CD4-positive, alpha-beta memory T cell (primary cell): ENCODE measurements at regions of chr5 and their contacts with region 1.

Region 1: DNA sequence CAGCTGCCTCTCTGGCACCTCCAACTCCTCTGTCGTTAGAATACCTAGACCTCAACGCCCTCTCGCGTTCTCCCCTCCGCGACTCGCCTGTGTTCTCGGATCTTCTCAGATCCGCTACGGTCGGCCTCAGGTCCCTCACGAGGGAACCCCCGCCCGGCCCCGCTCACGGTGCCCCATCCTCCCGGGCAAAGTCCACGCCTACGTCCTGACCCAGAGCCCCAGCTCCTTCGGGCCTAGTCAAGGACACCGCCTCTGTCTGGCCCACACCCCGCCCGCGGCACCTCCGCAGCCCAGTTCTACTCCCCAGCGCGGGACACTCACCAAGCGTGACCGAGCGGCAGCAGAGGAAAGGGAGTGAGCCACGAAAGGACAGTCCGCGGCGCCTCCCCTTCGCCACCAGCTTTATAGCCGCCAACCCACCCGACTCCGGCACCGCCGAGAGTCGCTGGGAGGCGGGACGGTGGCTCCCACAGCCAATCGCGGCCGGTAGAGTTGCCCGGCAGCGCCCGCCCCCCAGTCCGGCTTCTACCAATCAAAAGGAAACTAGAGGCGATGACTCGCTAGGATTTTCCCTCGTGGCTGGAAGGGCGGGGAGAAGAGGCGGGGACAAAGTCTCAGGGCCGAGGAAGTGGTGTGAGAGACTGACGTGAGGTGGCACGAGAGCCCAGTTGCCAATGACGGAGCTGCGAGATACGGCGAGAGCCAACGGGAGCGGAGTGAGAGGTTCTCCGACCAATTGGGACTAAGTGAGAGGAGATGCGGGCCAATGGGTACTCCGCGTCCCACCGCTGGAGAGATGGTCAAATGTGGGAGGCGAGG is at the start of gene HMGCS1:
- DNase-seq: peak; percentile 99 to 100 (median 99)
- H3K4me3 ChIP-seq: peak within 1 kb of the TSS; percentile 59 to 96
- H3K4me3 Mint-ChIP-seq: peak within 1 kb of the TSS; percentile 95 to 99 (median 98)
- H3K27ac ChIP-seq: peak within 1 kb of the TSS; percentile 95
- H3K27ac Mint-ChIP-seq: peak within 1 kb of the TSS; percentile 78 to 99 (median 98)
- H3K4me1 ChIP-seq: peaks cover 21% of the 10 kb centered on the region
- H3K4me1 Mint-ChIP-seq: peaks cover 19 to 39% (median 25%) of the 10 kb centered on the region in 4 donors
- H3K27me3 ChIP-seq: no peaks in the 10 kb centered on the region
- H3K27me3 Mint-ChIP-seq: no peaks in the 10 kb centered on the region
- total RNA-seq, gene HMGCS1: 27.7 to 35.7 TPM

Region 2: DNA sequence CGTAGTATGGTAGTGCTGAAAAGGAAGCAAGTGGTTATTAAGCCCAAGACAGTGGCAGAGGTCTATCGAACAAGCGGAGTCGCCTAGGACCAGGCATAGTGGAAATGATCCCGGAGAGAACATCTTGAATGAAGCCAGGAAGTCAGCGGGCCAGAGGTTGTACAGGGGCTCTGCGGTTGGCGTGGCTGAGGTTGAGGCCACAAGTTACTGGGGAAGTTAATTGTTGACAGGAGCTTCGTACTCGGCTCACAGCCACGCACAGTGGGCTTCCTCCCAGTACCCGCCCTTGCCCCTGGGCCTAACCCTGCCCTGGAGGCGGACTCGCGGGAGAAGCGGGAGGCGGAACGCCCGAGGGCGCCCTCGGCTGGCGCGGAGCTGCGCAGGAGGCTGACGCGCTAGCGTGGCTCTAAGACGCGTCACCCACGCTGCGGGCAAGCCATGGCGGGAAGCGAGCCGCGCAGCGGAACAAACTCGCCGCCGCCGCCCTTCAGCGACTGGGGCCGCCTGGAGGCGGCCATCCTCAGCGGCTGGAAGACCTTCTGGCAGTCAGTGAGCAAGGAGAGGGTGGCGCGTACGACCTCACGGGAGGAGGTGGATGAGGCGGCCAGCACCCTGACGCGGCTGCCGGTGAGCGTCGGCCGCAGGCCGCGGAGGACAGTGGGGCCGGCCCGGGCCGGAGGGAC is 1388.2 kb before region 1 on chr5 and contains the start of gene FBXO4:
- CTCF ChIA-PET with region 1: interaction called, 3 read pairs
- POLR2A ChIA-PET with region 1: interaction called, 3 read pairs
- intact Hi-C with region 1: loop called (anchors 2 kb)
- DNase-seq: peak; percentile 89 to 93 (median 91)
- H3K4me3 ChIP-seq: peak within 1 kb of the TSS; percentile 83 to 95
- H3K4me3 Mint-ChIP-seq: peak within 1 kb of the TSS; percentile 81 to 91 (median 89)
- H3K27ac ChIP-seq: peak within 1 kb of the TSS; percentile 93
- H3K27ac Mint-ChIP-seq: peak within 1 kb of the TSS; percentile 81 to 100 (median 98)
- H3K4me1 ChIP-seq: peaks cover 25% of the 10 kb centered on the region
- H3K4me1 Mint-ChIP-seq: peaks cover 10 to 33% (median 22%) of the 10 kb centered on the region in 4 donors
- H3K27me3 ChIP-seq: no peaks in the 10 kb centered on the region
- H3K27me3 Mint-ChIP-seq: no peaks in the 10 kb centered on the region
- total RNA-seq, gene FBXO4: 15.1 to 18.2 TPM

Region 3: GRCh38 chr5:42756606-42757601 is 556.3 kb before region 1 on chr5 and contains the start of gene CCDC152:
- CTCF ChIA-PET with region 1: no interaction called
- POLR2A ChIA-PET with region 1: no interaction called
- intact Hi-C with region 1: no loop called
- DNase-seq: peak; percentile 30 to 49 (median 35)
- H3K4me3 ChIP-seq: peak within 1 kb of the TSS in 1 of 2 donors; percentile 43
- H3K4me3 Mint-ChIP-seq: peak within 1 kb of the TSS; percentile 74 to 92 (median 87)
- H3K27ac ChIP-seq: no peak within 1 kb of the TSS
- H3K27ac Mint-ChIP-seq: peak within 1 kb of the TSS; percentile 19 to 67 (median 39)
- H3K4me1 ChIP-seq: no peaks in the 10 kb centered on the region
- H3K4me1 Mint-ChIP-seq: peaks cover 5 to 14% (median 8%) of the 10 kb centered on the region in 4 donors
- H3K27me3 ChIP-seq: no peaks in the 10 kb centered on the region
- H3K27me3 Mint-ChIP-seq: peaks cover 4 to 10% of the 10 kb centered on the region in 2 donors
- total RNA-seq, gene CCDC152: 5.9 to 6.9 TPM

Region 4: GRCh38 chr5:42985129-42986037 is 327.9 kb before region 1 on chr5:
- CTCF ChIA-PET with region 1: no interaction called
- POLR2A ChIA-PET with region 1: no interaction called
- intact Hi-C with region 1: no loop called
- DNase-seq: no peak
- H3K4me3 ChIP-seq: no peak overlapping the region
- H3K4me3 Mint-ChIP-seq: peak overlapping the region in 4 of 8 donors; percentile 20 to 61 (median 45)
- H3K27ac ChIP-seq: no peak overlapping the region
- H3K27ac Mint-ChIP-seq: peak overlapping the region in 5 of 7 donors; percentile 64 to 88 (median 77)
- H3K4me1 ChIP-seq: peaks cover 60% of the 10 kb centered on the region
- H3K4me1 Mint-ChIP-seq: peaks cover 40 to 61% (median 50%) of the 10 kb centered on the region in 4 donors
- H3K27me3 ChIP-seq: no peaks in the 10 kb centered on the region
- H3K27me3 Mint-ChIP-seq: no peaks in the 10 kb centered on the region

Region 5: GRCh38 chr5:43008369-43009153 is 304.7 kb before region 1 on chr5:
- CTCF ChIA-PET with region 1: no interaction called
- POLR2A ChIA-PET with region 1: interaction called, 25 read pairs
- intact Hi-C with region 1: no loop called
- DNase-seq: peak; percentile 89 to 92 (median 90)
- H3K4me3 ChIP-seq: peak overlapping the region; percentile 66 to 84
- H3K4me3 Mint-ChIP-seq: peak overlapping the region; percentile 84 to 94 (median 91)
- H3K27ac ChIP-seq: peak overlapping the region; percentile 85
- H3K27ac Mint-ChIP-seq: peak overlapping the region; percentile 90 to 99 (median 97)
- H3K4me1 ChIP-seq: peaks cover 38% of the 10 kb centered on the region
- H3K4me1 Mint-ChIP-seq: peaks cover 19 to 48% (median 33%) of the 10 kb centered on the region in 4 donors
- H3K27me3 ChIP-seq: no peaks in the 10 kb centered on the region
- H3K27me3 Mint-ChIP-seq: no peaks in the 10 kb centered on the region

Region 6: DNA sequence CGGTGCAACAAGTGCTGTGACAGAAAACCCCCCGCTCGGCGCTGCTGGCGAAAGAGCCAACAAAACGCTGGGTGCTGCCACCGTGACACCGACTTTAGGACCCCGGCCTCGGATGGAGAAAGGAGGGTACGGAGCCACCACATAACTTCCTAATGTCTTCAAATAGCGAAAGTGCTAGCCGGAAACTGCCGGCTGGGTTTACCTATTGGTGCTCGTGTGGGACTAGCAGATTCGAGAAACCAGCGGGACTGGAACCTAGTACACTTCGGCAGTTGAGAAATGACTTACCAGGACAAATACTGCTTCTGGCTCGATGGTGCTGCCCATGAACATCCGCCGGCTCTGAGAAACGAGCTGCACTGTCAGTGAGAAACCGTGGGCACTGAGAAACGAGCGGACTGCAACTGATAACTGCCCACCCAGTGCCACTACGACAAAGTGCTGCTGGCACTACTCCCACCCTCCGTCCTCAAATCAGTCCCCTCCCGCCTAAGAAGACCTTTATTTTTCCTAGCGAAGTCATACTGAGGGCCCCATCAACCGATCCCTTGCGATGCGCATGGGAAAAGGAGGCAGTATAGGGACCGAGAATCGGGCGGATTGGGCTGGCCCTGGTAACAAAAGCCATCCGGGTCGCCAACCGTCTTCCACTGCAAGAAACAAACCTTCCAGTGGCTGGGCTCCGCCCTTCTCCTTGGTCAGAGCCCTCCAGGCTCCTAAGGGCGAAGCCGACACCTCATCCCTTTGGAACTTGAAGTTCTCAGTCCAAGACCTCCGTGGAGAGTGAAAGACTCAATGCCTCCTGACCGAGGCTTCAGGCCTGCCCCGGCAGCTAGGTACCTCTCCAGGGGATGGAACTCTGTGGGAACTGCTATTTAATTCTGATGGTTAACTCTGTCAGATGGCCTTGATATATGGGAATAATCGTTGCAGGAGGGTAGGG is 246.2 kb before region 1 on chr5:
- CTCF ChIA-PET with region 1: no interaction called
- POLR2A ChIA-PET with region 1: interaction called, 36 read pairs
- intact Hi-C with region 1: loop called (anchors 1 kb)
- DNase-seq: peak; percentile 88 to 92 (median 90)
- H3K4me3 ChIP-seq: peak overlapping the region; percentile 97 to 99
- H3K4me3 Mint-ChIP-seq: peak overlapping the region; percentile 97 to 100 (median 98)
- H3K27ac ChIP-seq: peak overlapping the region; percentile 94
- H3K27ac Mint-ChIP-seq: peak overlapping the region; percentile 98 to 100 (median 99)
- H3K4me1 ChIP-seq: peaks cover 46% of the 10 kb centered on the region
- H3K4me1 Mint-ChIP-seq: peaks cover 31 to 59% (median 43%) of the 10 kb centered on the region in 4 donors
- H3K27me3 ChIP-seq: no peaks in the 10 kb centered on the region
- H3K27me3 Mint-ChIP-seq: no peaks in the 10 kb centered on the region

Region 7: DNA sequence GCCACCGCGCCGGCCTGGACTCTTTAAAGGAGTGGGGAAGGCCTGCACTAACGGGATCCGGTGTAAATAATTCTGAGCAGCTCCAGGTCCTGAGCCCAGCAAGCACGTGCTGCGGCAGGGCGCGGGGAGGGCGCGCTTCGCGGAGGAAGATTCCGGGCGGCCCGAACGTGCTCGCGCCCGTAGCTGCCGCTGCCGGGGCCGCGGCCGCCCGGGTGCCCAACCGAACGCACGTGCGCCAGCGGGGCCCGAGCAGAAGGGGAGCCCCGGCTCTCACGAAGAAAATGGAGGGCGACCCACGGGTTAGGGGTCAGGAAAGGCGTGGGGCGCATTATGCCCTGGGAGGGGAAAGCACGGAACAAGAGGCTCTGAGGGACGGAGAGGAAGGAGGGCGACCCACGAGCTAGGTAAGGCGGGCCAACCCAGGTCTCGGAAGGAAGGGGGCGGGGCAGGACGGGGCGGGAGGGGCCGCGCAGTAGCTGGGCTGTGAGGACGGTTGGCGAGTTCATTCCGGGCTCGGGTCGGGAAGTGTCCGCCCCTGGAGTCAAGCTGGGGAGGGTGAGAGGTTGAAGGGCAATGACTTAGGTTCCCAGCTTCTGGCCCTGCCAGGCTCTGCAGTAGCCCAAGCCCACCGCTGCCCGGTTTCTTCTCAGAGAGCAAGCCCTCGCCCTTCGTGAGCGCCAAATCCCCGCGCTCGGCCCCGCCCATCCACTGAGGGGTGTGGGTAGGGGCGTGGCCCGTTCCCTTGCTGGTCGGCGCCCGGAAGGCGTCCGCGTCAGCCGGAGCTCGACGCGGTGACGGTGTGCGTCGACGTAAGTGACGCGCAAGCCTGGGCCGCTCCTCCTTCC is 192.3 kb before region 1 on chr5 and contains the start of gene ZNF131:
- CTCF ChIA-PET with region 1: interaction called, 14 read pairs
- POLR2A ChIA-PET with region 1: interaction called, 50 read pairs
- intact Hi-C with region 1: loop called (anchors 1 kb)
- DNase-seq: peak; percentile 95 to 100 (median 98)
- H3K4me3 ChIP-seq: peak within 1 kb of the TSS; percentile 85 to 87
- H3K4me3 Mint-ChIP-seq: peak within 1 kb of the TSS; percentile 91 to 96 (median 94)
- H3K27ac ChIP-seq: peak within 1 kb of the TSS; percentile 97
- H3K27ac Mint-ChIP-seq: peak within 1 kb of the TSS; percentile 87 to 99 (median 98)
- H3K4me1 ChIP-seq: peaks cover 45% of the 10 kb centered on the region
- H3K4me1 Mint-ChIP-seq: peaks cover 21 to 46% (median 37%) of the 10 kb centered on the region in 4 donors
- H3K27me3 ChIP-seq: no peaks in the 10 kb centered on the region
- H3K27me3 Mint-ChIP-seq: no peaks in the 10 kb centered on the region
- total RNA-seq, gene ZNF131: 76.5 to 86.9 TPM

Region 8: GRCh38 chr5:43227655-43228054 is 85.6 kb before region 1 on chr5:
- CTCF ChIA-PET with region 1: no interaction called
- POLR2A ChIA-PET with region 1: no interaction called
- intact Hi-C with region 1: no loop called
- DNase-seq: no peak
- H3K4me3 ChIP-seq: no peak overlapping the region
- H3K4me3 Mint-ChIP-seq: no peak overlapping the region
- H3K27ac ChIP-seq: no peak overlapping the region
- H3K27ac Mint-ChIP-seq: no peak overlapping the region
- H3K4me1 ChIP-seq: no peaks in the 10 kb centered on the region
- H3K4me1 Mint-ChIP-seq: no peaks in the 10 kb centered on the region
- H3K27me3 ChIP-seq: no peaks in the 10 kb centered on the region
- H3K27me3 Mint-ChIP-seq: peaks cover 0 to 2% of the 10 kb centered on the region in 2 donors

Region 9: DNA sequence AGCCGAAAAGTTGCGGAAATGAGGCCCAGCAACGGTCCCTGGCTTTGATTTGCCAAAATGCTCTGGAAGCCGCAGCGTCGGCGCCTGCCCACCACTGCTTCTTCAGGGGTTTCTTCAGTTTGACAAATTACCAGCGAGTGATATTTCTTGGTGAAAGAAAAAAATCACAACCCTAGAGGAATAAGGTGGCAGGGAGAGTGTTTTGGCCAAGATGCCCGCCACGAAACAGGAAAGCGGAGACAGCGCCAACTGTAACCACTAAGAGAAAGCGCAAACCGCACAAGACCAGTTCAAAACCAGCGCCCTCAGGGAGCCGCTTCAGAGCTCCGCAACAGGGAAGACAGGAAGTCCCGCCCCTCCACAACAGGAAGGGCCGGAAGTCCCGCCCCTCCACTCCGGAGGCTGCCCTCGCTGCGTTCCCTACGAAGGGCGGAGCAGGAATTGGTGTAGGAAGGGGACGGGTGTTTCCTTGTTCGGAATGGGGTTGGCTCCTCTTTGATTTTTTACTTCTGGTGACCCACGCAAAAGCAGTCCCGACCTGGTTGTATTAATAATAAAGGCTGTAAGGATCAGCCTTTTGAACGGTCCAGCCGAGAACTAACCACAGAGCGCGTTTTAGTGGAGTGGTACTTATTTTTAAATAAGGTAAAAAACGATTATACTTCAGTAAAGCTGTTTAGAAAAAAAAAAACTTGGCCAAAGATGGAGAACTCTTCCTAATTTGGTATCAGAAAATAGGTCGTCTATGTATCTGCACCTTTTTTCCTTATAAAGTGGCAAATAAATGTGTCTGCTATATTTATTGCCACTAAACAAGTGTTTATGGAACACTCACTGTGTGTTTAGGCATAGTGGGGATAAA is 201.8 kb after region 1 on chr5 and contains the start of gene C5orf34:
- CTCF ChIA-PET with region 1: no interaction called
- POLR2A ChIA-PET with region 1: interaction called, 14 read pairs
- intact Hi-C with region 1: loop called (anchors 1 kb)
- DNase-seq: peak; percentile 90 to 93 (median 91)
- H3K4me3 ChIP-seq: peak within 1 kb of the TSS; percentile 54 to 92
- H3K4me3 Mint-ChIP-seq: peak within 1 kb of the TSS; percentile 90 to 97 (median 94)
- H3K27ac ChIP-seq: peak within 1 kb of the TSS; percentile 76
- H3K27ac Mint-ChIP-seq: peak within 1 kb of the TSS; percentile 90 to 98 (median 95)
- H3K4me1 ChIP-seq: peaks cover 25% of the 10 kb centered on the region
- H3K4me1 Mint-ChIP-seq: peaks cover 22 to 35% (median 27%) of the 10 kb centered on the region in 4 donors
- H3K27me3 ChIP-seq: no peaks in the 10 kb centered on the region
- H3K27me3 Mint-ChIP-seq: no peaks in the 10 kb centered on the region
- total RNA-seq, gene C5orf34: 2.5 to 2.9 TPM

Region 10: DNA sequence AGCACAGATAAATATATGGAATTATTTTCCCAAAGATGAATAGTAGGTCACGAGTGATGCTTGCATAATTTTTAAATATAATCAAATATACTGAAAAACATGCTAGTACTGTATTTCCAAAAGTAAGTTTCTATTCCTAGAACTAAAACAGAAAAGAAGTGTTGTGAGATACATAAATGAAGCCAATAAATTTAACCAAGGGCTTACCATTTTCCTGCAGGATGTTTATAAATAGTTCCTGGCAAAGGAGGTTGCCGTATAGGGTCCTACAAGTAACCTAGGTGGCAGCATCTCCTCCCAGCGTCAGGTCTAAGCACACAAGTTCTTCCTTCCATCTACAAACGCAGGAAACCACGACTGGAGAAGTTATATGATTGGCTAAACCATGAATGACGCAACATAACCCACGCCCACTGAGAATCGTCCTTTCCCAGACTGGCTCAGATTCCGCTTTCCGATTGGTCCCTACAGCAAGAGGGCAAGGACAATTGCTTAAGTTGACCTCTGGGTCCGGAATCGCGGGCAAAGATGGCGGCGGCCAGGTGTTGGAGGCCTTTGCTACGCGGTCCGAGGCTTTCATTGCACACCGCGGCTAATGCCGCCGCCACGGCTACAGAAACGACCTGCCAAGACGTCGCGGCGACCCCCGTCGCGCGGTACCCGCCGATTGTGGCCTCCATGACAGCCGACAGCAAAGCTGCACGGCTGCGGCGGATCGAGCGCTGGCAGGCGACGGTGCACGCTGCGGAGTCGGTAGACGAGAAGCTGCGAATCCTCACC is 1495.4 kb after region 1 on chr5 and contains the start of gene MRPS30:
- CTCF ChIA-PET with region 1: no interaction called
- POLR2A ChIA-PET with region 1: no interaction called
- intact Hi-C with region 1: loop called (anchors 2 kb)
- DNase-seq: peak; percentile 93 to 96 (median 94)
- H3K4me3 ChIP-seq: peak within 1 kb of the TSS; percentile 90 to 91
- H3K4me3 Mint-ChIP-seq: peak within 1 kb of the TSS; percentile 84 to 97 (median 94)
- H3K27ac ChIP-seq: peak within 1 kb of the TSS; percentile 78
- H3K27ac Mint-ChIP-seq: peak within 1 kb of the TSS; percentile 91 to 98 (median 96)
- H3K4me1 ChIP-seq: peaks cover 21% of the 10 kb centered on the region
- H3K4me1 Mint-ChIP-seq: peaks cover 18 to 38% (median 31%) of the 10 kb centered on the region in 4 donors
- H3K27me3 ChIP-seq: no peaks in the 10 kb centered on the region
- H3K27me3 Mint-ChIP-seq: peaks cover 0 to 2% of the 10 kb centered on the region in 2 donors
- total RNA-seq, gene MRPS30: 54.1 to 56.1 TPM